H1 (cell line): ENCODE measurements at regions of chr11 and their contacts with region 1.

Region 1: DNA sequence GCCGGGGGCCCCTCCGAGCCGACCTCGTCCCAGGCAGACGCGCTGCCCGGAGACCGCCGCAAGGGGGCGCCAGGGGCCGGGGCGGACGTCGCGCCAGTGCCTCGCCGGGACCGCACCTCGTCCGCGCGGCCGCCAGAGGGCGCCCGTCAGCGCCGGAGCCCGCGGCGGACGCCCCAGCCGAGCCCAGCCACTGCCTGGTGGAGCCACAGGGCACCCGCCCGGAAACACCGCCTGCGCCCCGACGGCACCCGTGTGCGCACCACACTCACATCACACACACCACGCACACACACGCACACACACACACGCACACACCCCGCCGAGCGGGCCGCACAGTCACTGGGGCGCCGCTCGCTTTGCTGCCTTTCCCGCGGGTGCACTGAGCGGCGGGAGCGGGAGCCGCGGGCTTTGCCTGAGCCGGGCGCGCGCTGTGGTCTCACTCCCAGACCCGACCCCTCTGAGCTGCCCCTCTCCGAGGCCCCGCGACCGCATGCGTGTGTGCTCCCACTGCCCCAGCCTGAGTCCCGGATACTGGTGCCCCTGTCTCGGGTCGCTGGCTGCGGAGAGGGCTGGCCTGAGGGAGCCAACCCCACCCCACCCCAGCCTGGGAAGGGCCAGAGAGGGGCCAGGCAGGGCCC is 449.3 kb downstream of the OPCML start:
- DNase-seq: peak in 1 of 2 experiments; percentile 95
- H3K4me3 ChIP-seq: peak overlapping the region; percentile 43 to 65 (median 54)
- H3K27ac ChIP-seq: no peak overlapping the region
- H3K4me1 ChIP-seq: peaks cover 0 to 9% (median 6%) of the 10 kb centered on the region in 4 experiments; a peak in 6 of 7 replicates
- H3K27me3 ChIP-seq: peaks cover 0 to 8% (median 6%) of the 10 kb centered on the region in 4 experiments; a peak in 3 of 7 replicates
- CTCF ChIP-seq: peak; percentile 93 to 99 (median 98)
- EP300 ChIP-seq: no peak; a peak in 1 of 3 replicates
- POLR2A ChIP-seq: no peak
- RAD21 ChIP-seq: peak; percentile 52 to 84; a peak in 3 of 4 replicates

Region 2: GRCh38 chr11:132620423-132620822 is 462.5 kb before region 1 on chr11:
- CTCF ChIA-PET with region 1: no interaction called
- POLR2A ChIA-PET with region 1: no interaction called
- DNase-seq: no peak
- H3K4me3 ChIP-seq: no peak overlapping the region
- H3K27ac ChIP-seq: no peak overlapping the region
- H3K4me1 ChIP-seq: no peaks in the 10 kb centered on the region
- H3K27me3 ChIP-seq: no peaks in the 10 kb centered on the region
- CTCF ChIP-seq: no peak
- EP300 ChIP-seq: no peak
- POLR2A ChIP-seq: no peak
- RAD21 ChIP-seq: no peak

Region 3: DNA sequence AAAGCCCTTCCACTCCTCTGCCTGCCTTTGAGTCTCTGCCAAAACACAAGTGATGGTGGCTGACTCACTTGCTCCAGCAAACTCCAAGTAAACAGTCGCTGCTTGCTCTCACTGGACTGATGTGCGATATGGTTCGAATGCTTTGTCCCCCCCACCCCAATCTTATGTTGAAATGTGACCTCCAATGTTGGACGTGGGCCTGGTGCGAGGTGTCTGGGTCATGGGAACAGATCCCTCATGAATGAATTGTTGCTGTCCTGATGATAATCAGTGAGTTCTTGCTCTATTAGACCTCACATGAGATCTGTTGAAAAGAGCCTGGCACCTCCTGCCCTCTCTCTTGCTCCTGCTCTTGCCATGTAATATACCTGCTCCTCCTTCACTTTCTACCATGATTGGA is 298.5 kb before region 1 on chr11:
- CTCF ChIA-PET with region 1: no interaction called
- POLR2A ChIA-PET with region 1: no interaction called
- DNase-seq: no peak
- H3K4me3 ChIP-seq: no peak overlapping the region
- H3K27ac ChIP-seq: no peak overlapping the region
- H3K4me1 ChIP-seq: peaks cover 1 to 10% (median 7%) of the 10 kb centered on the region in 4 experiments; a peak in 5 of 7 replicates
- H3K27me3 ChIP-seq: no peaks in the 10 kb centered on the region; a peak in 1 of 7 replicates
- CTCF ChIP-seq: no peak
- EP300 ChIP-seq: no peak
- POLR2A ChIP-seq: no peak
- RAD21 ChIP-seq: no peak

Region 4: DNA sequence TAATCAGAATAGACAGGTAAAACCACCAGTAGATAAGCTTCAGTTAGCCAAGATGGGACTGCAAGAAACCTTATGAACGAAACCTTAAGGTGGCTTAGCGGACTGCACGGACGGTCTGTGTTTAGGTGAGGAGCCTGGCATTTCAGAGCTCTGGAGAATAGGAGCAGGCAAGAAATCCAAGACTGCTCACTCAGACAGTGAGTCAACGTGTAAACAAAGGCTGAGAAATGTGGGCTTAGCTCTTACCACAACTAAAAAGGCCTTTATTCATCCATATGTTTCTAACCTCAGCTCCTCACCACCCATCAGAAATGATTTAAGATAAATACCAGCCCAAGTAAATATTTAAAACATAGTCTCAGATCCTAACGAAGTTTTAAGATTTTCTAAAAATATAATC is 208.3 kb before region 1 on chr11:
- CTCF ChIA-PET with region 1: no interaction called
- POLR2A ChIA-PET with region 1: no interaction called
- DNase-seq: no peak
- H3K4me3 ChIP-seq: no peak overlapping the region
- H3K27ac ChIP-seq: no peak overlapping the region
- H3K4me1 ChIP-seq: no peaks in the 10 kb centered on the region
- H3K27me3 ChIP-seq: no peaks in the 10 kb centered on the region
- CTCF ChIP-seq: no peak
- EP300 ChIP-seq: no peak
- POLR2A ChIP-seq: no peak
- RAD21 ChIP-seq: no peak

Region 5: DNA sequence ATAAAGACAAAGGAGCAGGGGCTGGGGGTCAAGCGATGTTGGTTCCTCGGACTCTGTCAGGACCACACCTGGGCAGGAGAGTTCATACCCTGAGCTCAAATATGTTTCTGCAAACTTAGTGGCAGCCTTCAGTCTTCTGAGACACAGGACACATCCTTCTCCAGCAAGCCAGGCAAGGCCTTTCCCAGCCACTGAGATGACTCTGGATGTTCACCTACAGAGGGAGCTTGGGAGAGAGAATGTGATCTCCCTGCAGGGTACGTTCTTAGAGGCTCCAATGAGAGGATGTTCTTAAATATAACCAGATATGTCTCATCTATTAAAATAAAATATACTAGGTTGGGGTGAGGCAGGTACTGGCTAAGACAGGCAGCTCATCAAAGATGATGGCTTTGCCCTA is 12.2 kb before region 1 on chr11:
- CTCF ChIA-PET with region 1: interaction called, 49 read pairs
- POLR2A ChIA-PET with region 1: interaction called, 10 read pairs
- DNase-seq: no peak
- H3K4me3 ChIP-seq: no peak overlapping the region
- H3K27ac ChIP-seq: no peak overlapping the region
- H3K4me1 ChIP-seq: peaks cover 0 to 19% (median 12%) of the 10 kb centered on the region in 4 experiments; a peak in 6 of 7 replicates
- H3K27me3 ChIP-seq: no peaks in the 10 kb centered on the region
- CTCF ChIP-seq: peak in 2 of 3 experiments; percentile 13 to 33; a peak in 2 of 4 replicates
- EP300 ChIP-seq: no peak
- POLR2A ChIP-seq: no peak
- RAD21 ChIP-seq: peak in 1 of 2 experiments; percentile 13; a peak in 1 of 4 replicates

Region 6: DNA sequence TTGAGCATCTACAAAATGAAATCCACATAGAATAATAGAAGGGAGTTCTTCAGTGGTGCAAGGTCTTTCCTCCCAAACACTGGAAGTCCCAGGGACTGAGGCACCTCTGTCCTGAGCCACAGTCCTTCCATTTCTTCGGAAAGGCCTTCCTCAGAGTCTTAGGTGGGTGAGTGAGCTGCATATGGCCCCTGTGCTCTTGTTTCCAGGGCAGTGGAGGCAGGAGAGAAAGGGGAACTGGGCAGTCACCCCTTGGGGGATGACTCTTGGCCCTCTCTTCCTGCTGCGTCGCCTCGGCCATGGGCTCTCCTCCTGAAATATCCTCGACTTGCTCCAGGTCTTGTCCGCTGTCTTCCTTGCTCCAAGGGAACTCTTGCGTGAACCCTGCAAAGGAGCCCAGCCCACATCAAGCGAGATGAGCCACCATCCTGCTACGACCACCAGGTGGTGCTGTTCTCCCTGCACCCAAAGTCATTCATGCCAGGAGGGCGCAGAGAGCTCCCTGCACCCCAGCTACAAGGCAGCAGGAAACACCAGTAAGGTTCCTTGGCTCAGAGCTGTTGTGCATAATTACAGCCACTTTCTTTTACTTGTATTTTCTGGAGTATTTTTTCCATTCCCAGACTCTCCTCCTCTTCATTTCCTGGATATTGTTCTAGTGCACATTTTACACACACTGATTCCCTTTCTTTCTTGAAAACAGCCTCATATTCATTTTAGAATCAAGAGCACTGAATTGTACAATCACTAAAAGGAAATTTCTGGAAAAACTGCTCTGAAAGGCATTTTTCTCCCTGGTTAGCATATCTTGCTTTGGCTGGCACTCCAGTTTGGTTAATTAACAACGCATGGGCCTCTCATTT is 51.6 kb after region 1 on chr11:
- CTCF ChIA-PET with region 1: interaction called, 21 read pairs
- POLR2A ChIA-PET with region 1: no interaction called
- DNase-seq: peak; percentile 77 to 83
- H3K4me3 ChIP-seq: no peak overlapping the region
- H3K27ac ChIP-seq: no peak overlapping the region
- H3K4me1 ChIP-seq: peaks cover 0 to 7% (median 3%) of the 10 kb centered on the region in 4 experiments; a peak in 3 of 7 replicates
- H3K27me3 ChIP-seq: no peaks in the 10 kb centered on the region
- CTCF ChIP-seq: peak; percentile 92 to 99 (median 97)
- EP300 ChIP-seq: no peak
- POLR2A ChIP-seq: no peak
- RAD21 ChIP-seq: peak; percentile 95

Region 7: GRCh38 chr11:133156986-133157745 is 74.2 kb after region 1 on chr11:
- CTCF ChIA-PET with region 1: interaction called, 102 read pairs
- POLR2A ChIA-PET with region 1: no interaction called
- DNase-seq: no peak
- H3K4me3 ChIP-seq: no peak overlapping the region
- H3K27ac ChIP-seq: no peak overlapping the region
- H3K4me1 ChIP-seq: peaks cover 0 to 4% (median 2%) of the 10 kb centered on the region in 4 experiments; a peak in 3 of 7 replicates
- H3K27me3 ChIP-seq: no peaks in the 10 kb centered on the region
- CTCF ChIP-seq: peak; percentile 77 to 85 (median 80)
- EP300 ChIP-seq: no peak
- POLR2A ChIP-seq: no peak
- RAD21 ChIP-seq: peak; percentile 82 to 88

Region 8: DNA sequence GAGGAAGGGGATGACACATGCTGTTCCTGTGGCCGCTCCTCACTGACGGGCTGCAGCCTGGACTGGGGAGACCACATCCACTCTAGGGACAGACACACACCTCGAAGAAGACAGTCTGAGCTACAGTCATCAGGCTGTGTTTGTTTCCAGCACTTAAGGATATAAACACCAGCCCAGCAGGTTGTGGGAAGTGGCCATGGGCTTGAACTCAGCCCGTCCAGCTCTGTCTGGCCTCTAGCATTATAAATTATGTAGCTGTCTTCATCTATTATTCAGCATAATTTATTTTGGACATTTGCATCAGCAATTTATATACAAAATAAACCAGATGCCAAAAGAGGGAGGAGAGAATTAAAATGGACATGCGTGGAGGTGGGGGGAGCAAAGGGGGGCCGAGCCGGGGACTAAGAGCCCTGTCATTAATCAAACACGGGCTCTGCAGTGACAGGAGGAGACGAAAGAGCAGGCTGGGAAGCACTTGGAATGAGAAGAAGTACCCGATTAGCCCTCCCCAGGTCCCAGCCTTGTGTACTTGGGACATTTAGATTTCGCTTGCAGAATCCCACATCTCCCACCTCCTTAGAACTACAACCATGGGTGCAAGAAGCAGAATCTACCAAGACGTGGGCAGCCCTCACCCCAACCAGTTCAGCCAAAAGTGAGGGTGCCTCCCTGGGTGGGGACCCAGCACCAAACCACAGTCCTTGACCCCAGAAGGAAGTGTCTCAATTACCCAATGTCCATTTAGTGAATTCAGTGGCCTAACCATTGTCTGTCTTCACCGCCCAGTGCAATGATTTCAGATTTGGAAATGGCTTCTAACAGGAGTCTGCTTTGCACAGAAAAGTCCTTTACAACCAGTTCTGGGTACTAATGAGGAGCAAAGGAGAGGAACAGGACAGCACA is 139.7 kb after region 1 on chr11:
- CTCF ChIA-PET with region 1: interaction called, 11 read pairs
- POLR2A ChIA-PET with region 1: no interaction called
- DNase-seq: no peak
- H3K4me3 ChIP-seq: no peak overlapping the region
- H3K27ac ChIP-seq: no peak overlapping the region
- H3K4me1 ChIP-seq: peaks cover 0 to 5% (median 4%) of the 10 kb centered on the region in 4 experiments; a peak in 5 of 7 replicates
- H3K27me3 ChIP-seq: 0 out of 7 replicates have a peak, but pooled peaks cover 0 to under 1% (median 0%) of the 10 kb centered on the region in 4 experiments
- CTCF ChIP-seq: no peak
- EP300 ChIP-seq: no peak
- POLR2A ChIP-seq: no peak
- RAD21 ChIP-seq: no peak

Region 9: GRCh38 chr11:133827556-133827955 is 744.6 kb after region 1 on chr11:
- CTCF ChIA-PET with region 1: interaction called, 36 read pairs
- POLR2A ChIA-PET with region 1: interaction called, 3 read pairs
- DNase-seq: no peak
- H3K4me3 ChIP-seq: no peak overlapping the region
- H3K27ac ChIP-seq: no peak overlapping the region
- H3K4me1 ChIP-seq: no peaks in the 10 kb centered on the region
- H3K27me3 ChIP-seq: no peaks in the 10 kb centered on the region
- CTCF ChIP-seq: no peak
- EP300 ChIP-seq: no peak
- POLR2A ChIP-seq: no peak
- RAD21 ChIP-seq: no peak

Region 10: GRCh38 chr11:133842053-133842452 is 759.1 kb after region 1 on chr11:
- CTCF ChIA-PET with region 1: interaction called, 97 read pairs
- POLR2A ChIA-PET with region 1: no interaction called
- DNase-seq: no peak
- H3K4me3 ChIP-seq: no peak overlapping the region
- H3K27ac ChIP-seq: no peak overlapping the region
- H3K4me1 ChIP-seq: peaks cover 0 to 2% (median 0%) of the 10 kb centered on the region in 4 experiments; a peak in 1 of 7 replicates
- H3K27me3 ChIP-seq: peaks cover 0 to 4% (median 0%) of the 10 kb centered on the region in 4 experiments; a peak in 1 of 7 replicates
- CTCF ChIP-seq: no peak
- EP300 ChIP-seq: no peak
- POLR2A ChIP-seq: no peak
- RAD21 ChIP-seq: no peak